ENCODE measurements at regions of chr5 and their contacts with region 1.

Region 1: GRCh38 chr5:10353241-10354047 is at the start of gene MARCHF6:
- DNase-seq: peak; percentile 96 to 98
- H3K4me3 ChIP-seq: peak within 1 kb of the TSS; percentile 78
- H3K4me3 Mint-ChIP-seq: peak within 1 kb of the TSS; percentile 97
- H3K27ac Mint-ChIP-seq: peak within 1 kb of the TSS; percentile 99
- H3K4me1 ChIP-seq: peaks cover 7% of the 10 kb centered on the region; the same call in 1 of the 2 replicates
- H3K4me1 Mint-ChIP-seq: peaks cover 7% of the 10 kb centered on the region
- H3K27me3 ChIP-seq: no peaks in the 10 kb centered on the region
- H3K27me3 Mint-ChIP-seq: no peaks in the 10 kb centered on the region
- CTCF ChIP-seq: no peak
- total RNA-seq, gene MARCHF6: 111 and 123 TPM in 2 replicates

Region 2: DNA sequence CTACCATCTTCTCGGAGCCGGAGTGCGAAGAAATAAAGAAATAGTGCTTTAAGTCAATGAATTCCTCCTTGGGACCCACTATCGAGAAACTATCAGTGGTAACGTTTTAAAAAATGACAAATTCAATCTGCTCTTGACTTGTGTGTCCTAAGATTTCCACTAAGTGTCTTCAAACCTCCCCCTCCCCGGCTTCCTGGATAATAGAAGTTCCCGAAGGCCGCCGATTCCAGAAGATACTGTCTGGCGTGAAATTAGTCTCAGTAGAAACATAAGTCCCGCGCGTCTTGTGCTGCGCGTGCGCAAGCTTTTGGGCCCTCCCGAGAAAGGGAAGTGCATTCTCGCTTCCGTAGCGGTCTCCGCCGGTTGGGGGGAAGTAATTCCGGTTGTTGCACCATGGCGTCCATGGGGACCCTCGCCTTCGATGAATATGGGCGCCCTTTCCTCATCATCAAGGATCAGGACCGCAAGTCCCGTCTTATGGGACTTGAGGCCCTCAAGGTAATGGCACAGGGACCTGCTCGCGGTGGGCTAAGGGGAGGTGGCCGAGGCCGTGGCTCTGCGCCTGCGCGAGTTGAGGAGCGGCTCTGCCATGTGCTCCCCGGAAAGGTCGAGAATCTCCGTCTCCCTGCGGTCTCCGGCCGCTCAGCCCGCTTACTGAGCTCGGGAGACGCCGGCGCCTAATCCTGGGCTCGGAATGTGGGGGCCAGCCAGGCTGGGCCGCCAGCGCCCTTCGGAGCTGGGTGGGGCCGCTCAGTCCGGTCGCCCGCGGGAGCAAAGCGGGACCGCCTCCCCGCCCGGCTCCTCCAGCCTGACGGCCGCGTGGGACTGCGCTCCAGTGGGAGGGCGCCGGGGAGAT is 103.3 kb before region 1 on chr5 and contains the start of gene CCT5:
- CTCF ChIA-PET with region 1: no interaction called
- POLR2A ChIA-PET with region 1: interaction called, 5 read pairs
- intact Hi-C with region 1: loop called (anchors 2 kb)
- DNase-seq: peak; percentile 92 to 94
- H3K4me3 ChIP-seq: peak within 1 kb of the TSS; percentile 91
- H3K4me3 Mint-ChIP-seq: peak within 1 kb of the TSS; percentile 95
- H3K27ac Mint-ChIP-seq: peak within 1 kb of the TSS; percentile 89
- H3K4me1 ChIP-seq: peaks cover 11% of the 10 kb centered on the region; the same call in 1 of the 2 replicates
- H3K4me1 Mint-ChIP-seq: peaks cover 17% of the 10 kb centered on the region
- H3K27me3 ChIP-seq: no peaks in the 10 kb centered on the region
- H3K27me3 Mint-ChIP-seq: no peaks in the 10 kb centered on the region
- CTCF ChIP-seq: no peak
- total RNA-seq, gene CCT5: 462 and 480 TPM in 2 replicates

Region 3: DNA sequence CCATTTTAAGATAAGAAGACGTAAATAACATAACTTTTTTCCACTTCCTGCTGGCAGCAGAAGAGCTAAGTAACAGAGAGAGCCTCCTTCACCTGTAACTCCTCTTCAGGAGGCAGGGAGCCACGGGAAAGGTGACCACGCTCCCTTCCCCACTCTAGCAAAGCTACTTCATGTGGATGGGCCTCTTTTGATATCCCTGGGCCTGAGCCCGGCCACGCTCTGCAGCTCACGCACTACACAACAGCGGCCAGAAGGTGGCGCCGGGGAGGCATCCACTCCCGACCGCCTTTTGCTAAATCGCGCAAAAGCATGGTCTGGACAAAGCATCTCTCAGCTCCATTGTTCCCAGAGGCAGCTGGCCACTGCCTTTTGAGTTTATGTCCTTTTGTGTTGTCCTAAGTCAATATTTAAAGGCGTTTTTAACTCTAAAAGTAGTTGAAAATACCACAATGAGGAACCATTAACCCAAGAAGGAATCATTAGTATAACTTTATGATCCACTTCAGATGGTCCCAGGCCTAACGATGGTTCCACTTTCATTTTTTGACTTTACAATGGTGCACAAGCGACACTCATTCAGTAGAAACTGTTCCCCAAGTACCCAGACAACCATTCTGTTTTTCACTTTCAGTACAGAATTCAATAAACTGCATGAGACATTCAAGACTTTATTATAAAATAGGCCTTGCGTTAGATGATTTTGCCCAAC is 69.4 kb before region 1 on chr5:
- CTCF ChIA-PET with region 1: interaction called, 5 read pairs
- POLR2A ChIA-PET with region 1: no interaction called
- intact Hi-C with region 1: loop called (anchors 5 kb)
- DNase-seq: peak; percentile 75 to 82
- H3K4me3 ChIP-seq: no peak overlapping the region
- H3K4me3 Mint-ChIP-seq: no peak overlapping the region
- H3K27ac Mint-ChIP-seq: no peak overlapping the region
- H3K4me1 ChIP-seq: no peaks in the 10 kb centered on the region
- H3K4me1 Mint-ChIP-seq: no peaks in the 10 kb centered on the region
- H3K27me3 ChIP-seq: no peaks in the 10 kb centered on the region
- H3K27me3 Mint-ChIP-seq: no peaks in the 10 kb centered on the region
- CTCF ChIP-seq: peak; percentile 79 to 81

Region 4: DNA sequence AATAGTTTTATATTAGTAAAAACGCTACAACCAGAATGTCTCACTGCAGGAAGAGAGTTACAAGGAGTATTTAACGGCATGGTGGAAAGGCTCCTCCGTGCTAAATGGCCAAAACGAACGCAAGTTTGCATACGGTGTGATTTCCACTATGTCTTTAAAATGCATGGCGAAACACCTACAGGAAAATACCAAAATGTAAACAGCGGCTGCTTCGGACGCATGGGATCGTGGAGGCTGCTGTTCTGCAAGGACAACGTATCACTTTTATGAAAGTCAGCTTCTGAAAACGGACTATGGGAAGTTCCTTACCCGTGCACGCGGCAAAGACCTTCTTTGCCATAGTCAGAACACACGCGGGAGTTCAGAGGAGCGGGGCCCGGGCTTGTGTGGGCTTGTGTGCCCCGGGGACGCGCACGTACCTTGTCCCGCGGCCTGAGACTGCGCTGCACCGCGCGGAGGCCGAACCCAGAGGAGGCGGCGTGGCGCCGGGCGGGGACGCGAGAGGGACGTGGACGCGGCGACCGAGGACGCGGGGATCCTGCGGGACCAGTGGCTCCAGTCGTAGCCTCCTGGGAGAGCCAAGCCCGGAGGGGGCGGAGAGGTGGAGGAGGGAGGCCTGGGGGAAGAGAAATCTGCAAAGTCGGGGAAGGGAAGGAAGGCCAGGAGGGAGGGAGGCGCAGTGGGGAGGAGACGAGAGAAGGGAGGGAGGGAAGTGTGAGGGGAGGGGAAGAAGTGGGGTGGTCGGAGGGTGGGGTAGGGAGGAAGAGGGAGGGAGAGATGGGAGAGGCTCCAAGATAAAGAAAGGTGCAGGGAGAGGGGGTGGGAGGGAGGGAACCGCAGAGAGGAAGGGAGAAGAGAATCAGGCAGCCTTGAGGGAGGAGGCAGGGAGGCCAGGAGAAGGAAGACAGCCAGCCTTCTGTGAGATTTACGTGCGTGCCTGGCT is 46.0 kb before region 1 on chr5 and contains the start of gene CMBL:
- CTCF ChIA-PET with region 1: interaction called, 3 read pairs
- POLR2A ChIA-PET with region 1: interaction called, 4 read pairs
- intact Hi-C with region 1: loop called (anchors 1 kb)
- DNase-seq: peak; percentile 61 to 63
- H3K4me3 ChIP-seq: peak within 1 kb of the TSS; percentile 69
- H3K4me3 Mint-ChIP-seq: peak within 1 kb of the TSS; percentile 92
- H3K27ac Mint-ChIP-seq: peak within 1 kb of the TSS; percentile 87
- H3K4me1 ChIP-seq: peaks cover 4% of the 10 kb centered on the region
- H3K4me1 Mint-ChIP-seq: peaks cover 13% of the 10 kb centered on the region
- H3K27me3 ChIP-seq: no peaks in the 10 kb centered on the region
- H3K27me3 Mint-ChIP-seq: no peaks in the 10 kb centered on the region
- CTCF ChIP-seq: no peak
- total RNA-seq, gene CMBL: 16.5 and 18.4 TPM in 2 replicates

Region 5: GRCh38 chr5:10333154-10334006 is 20.1 kb before region 1 on chr5:
- CTCF ChIA-PET with region 1: no interaction called
- POLR2A ChIA-PET with region 1: no interaction called
- intact Hi-C with region 1: loop called (anchors 2 kb)
- DNase-seq: peak in 1 of 2 experiments; percentile 48
- H3K4me3 ChIP-seq: peak overlapping the region; percentile 11
- H3K4me3 Mint-ChIP-seq: peak overlapping the region; percentile 81
- H3K27ac Mint-ChIP-seq: no peak overlapping the region
- H3K4me1 ChIP-seq: no peaks in the 10 kb centered on the region
- H3K4me1 Mint-ChIP-seq: peaks cover 13% of the 10 kb centered on the region
- H3K27me3 ChIP-seq: no peaks in the 10 kb centered on the region
- H3K27me3 Mint-ChIP-seq: no peaks in the 10 kb centered on the region
- CTCF ChIP-seq: no peak